Activated CD4-positive, alpha-beta T cell treated with anti-CD3 and anti-CD28 coated beads for 36 hours (primary cell): ENCODE measurements at regions of chr21 and their contacts with region 1.

Region 1: DNA sequence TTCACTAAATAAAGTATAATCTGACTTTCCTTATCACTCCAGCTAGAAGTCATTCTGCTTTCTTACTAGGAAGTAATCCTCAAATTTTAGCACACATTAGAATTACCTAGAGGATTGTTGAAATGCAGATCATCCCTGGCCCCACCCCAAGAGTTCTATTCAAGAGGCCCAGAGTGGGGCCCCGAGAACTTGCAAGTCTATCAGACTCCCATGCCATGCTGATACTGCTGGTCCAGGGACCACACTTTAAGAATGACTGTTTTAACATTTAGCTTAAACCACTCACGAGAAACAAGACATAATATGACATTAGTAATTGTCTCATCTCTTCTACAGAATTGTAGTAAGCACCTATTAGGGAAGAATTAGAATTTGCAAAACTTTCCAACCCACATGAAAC is 7.7 kb upstream of the SYNJ1 start:
- DNase-seq: peak; percentile 38
- ATAC-seq: peak; percentile 69
- H3K4me3 Mint-ChIP-seq: no peak overlapping the region
- H3K27ac Mint-ChIP-seq: peak overlapping the region; percentile 80
- H3K4me1 Mint-ChIP-seq: peaks cover 51% of the 10 kb centered on the region
- H3K27me3 Mint-ChIP-seq: no peaks in the 10 kb centered on the region

Region 2: GRCh38 chr21:32749662-32750061 is 14.1 kb after region 1 on chr21:
- CTCF ChIA-PET with region 1: interaction called, 5 read pairs
- POLR2A ChIA-PET with region 1: interaction called, 3 read pairs
- intact Hi-C with region 1: loop called in 1 of 2 experiments (anchors 1 kb)
- DNase-seq: no peak
- ATAC-seq: no peak
- H3K4me3 Mint-ChIP-seq: no peak overlapping the region
- H3K27ac Mint-ChIP-seq: peak overlapping the region; percentile 47
- H3K4me1 Mint-ChIP-seq: peaks cover 52% of the 10 kb centered on the region
- H3K27me3 Mint-ChIP-seq: no peaks in the 10 kb centered on the region

Region 3: DNA sequence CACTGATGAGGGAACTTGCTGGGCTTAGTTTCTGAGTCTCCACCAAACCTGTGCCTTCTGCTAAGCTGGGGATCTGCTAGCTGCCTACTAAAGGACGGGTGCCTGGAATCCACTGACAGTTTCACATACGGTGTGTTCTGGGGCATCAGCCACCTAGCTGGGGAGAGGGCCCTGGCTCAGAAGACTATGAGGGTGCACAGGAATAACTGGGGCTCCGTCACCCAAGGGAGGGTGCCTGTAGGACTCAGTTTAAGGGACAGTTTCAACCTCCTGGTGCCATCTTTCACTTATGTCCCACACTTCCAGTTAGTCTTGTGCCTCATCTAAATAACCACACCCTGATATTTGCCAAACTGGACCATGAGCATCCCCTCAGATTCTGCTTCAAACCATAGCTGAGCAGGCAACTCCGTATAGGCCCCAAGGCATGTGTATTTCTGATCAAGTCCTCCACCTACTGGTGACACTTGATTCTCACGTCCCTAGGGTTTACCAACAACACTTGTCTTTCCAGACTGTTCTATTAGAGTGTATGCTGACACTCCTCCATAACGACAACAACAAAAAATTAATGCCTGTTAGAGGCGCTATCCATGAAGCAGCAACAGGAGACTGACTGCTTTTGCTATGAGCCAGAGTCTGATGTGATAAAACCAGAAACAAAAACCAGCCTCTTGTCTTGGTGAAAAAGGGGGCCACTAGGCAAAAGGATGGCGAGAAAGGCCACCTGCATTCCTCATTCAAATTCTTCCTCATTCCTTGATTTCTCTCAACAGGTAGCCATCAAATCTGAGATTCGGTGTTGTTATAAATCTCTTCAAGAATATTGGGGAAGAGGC is 91.0 kb after region 1 on chr21:
- CTCF ChIA-PET with region 1: no interaction called
- POLR2A ChIA-PET with region 1: no interaction called
- intact Hi-C with region 1: no loop called
- DNase-seq: peak; percentile 56
- ATAC-seq: peak; percentile 94
- H3K4me3 Mint-ChIP-seq: no peak overlapping the region
- H3K27ac Mint-ChIP-seq: no peak overlapping the region
- H3K4me1 Mint-ChIP-seq: no peaks in the 10 kb centered on the region
- H3K27me3 Mint-ChIP-seq: no peaks in the 10 kb centered on the region